Activated CD4-positive, alpha-beta memory T cell treated with anti-CD3 and anti-CD28 coated beads, Interleukin-2, amount 10 ng/mL, durations not matched to agents 7 days and 5 days (primary cell): ENCODE measurements at regions of chr20 and their contacts with region 1.

Region 1: GRCh38 chr20:31661625-31662371 is 24.1 kb downstream of the COX4I2 start:
- DNase-seq: peak; percentile 81
- H3K4me3 Mint-ChIP-seq: peak overlapping the region; percentile 69
- H3K27ac Mint-ChIP-seq: peak overlapping the region; percentile 80
- H3K4me1 Mint-ChIP-seq: peaks cover 55% of the 10 kb centered on the region
- H3K27me3 Mint-ChIP-seq: no peaks in the 10 kb centered on the region

Region 2: GRCh38 chr20:31674895-31675827 is 13.4 kb after region 1 on chr20:
- CTCF ChIA-PET with region 1: interaction called, 79 read pairs
- POLR2A ChIA-PET with region 1: interaction called, 77 read pairs
- DNase-seq: peak; percentile 84
- H3K4me3 Mint-ChIP-seq: peak overlapping the region; percentile 76
- H3K27ac Mint-ChIP-seq: peak overlapping the region; percentile 93
- H3K4me1 Mint-ChIP-seq: peaks cover 86% of the 10 kb centered on the region
- H3K27me3 Mint-ChIP-seq: no peaks in the 10 kb centered on the region

Region 3: GRCh38 chr20:31691646-31692275 is 30.0 kb after region 1 on chr20:
- CTCF ChIA-PET with region 1: interaction called, 39 read pairs
- POLR2A ChIA-PET with region 1: interaction called, 6 read pairs
- DNase-seq: no peak
- H3K4me3 Mint-ChIP-seq: no peak overlapping the region
- H3K27ac Mint-ChIP-seq: peak overlapping the region; percentile 73
- H3K4me1 Mint-ChIP-seq: peaks cover 61% of the 10 kb centered on the region
- H3K27me3 Mint-ChIP-seq: no peaks in the 10 kb centered on the region

Region 4: GRCh38 chr20:31712564-31713311 is 50.9 kb after region 1 on chr20:
- CTCF ChIA-PET with region 1: interaction called, 609 read pairs
- POLR2A ChIA-PET with region 1: interaction called, 213 read pairs
- DNase-seq: no peak
- H3K4me3 Mint-ChIP-seq: no peak overlapping the region
- H3K27ac Mint-ChIP-seq: peak overlapping the region; percentile 34
- H3K4me1 Mint-ChIP-seq: peaks cover 92% of the 10 kb centered on the region
- H3K27me3 Mint-ChIP-seq: no peaks in the 10 kb centered on the region